AG04450 (cell line): ENCODE measurements at regions of chr14 and their contacts with region 1.

Region 1: DNA sequence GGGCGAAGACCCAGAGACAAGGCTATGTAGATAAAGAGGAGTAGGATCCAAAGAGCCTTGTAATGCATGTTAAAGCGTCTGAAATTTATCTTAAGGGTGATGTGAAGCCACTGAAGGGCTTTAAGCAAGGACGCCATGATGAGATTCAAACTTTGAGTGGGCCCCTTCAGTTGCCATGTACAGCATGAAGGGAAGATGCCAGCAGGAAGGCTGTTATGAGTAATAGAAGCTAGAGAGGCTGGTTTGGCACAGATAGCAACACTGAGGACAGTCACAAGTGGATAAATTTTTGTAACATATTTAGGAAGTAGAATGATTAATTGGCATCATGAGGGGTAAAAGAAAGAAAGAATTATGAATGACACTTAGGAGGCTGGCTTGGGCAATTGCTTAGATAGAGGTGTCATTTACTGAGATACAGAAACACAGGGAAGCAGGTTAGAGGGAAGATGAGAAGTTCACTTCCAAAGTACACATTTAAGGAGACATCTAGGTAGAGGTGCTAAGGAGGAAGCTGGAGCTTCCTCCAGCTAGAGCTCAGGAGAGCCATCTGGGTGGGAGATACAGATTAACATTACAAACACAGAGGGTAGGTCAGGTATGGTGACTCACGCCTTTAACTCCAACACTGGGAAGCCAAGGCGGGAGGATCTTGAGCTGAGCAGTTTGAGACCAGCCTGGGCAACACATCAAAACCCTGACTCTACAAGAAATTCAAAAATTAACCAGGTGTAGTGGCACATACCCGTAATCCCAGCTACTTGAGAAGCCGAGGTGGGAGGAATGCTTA is 13.7 kb downstream of the ATG2B start:
- DNase-seq: no peak
- H3K4me3 ChIP-seq: no peak overlapping the region
- H3K27ac ChIP-seq: no peak overlapping the region
- H3K27me3 ChIP-seq: no peaks in the 10 kb centered on the region
- CTCF ChIP-seq: no peak

Region 2: GRCh38 chr14:96320605-96321004 is 28.9 kb before region 1 on chr14:
- CTCF ChIA-PET with region 1: no interaction called
- POLR2A ChIA-PET with region 1: no interaction called
- DNase-seq: no peak
- H3K4me3 ChIP-seq: no peak overlapping the region
- H3K27ac ChIP-seq: no peak overlapping the region
- H3K27me3 ChIP-seq: no peaks in the 10 kb centered on the region
- CTCF ChIP-seq: no peak

Region 3: GRCh38 chr14:96362965-96363756 is 13.7 kb after region 1 on chr14 and contains the starts of genes ATG2B and GSKIP:
- CTCF ChIA-PET with region 1: no interaction called
- POLR2A ChIA-PET with region 1: interaction called, 10 read pairs
- DNase-seq: peak; percentile 43
- H3K4me3 ChIP-seq: peak within 1 kb of the TSS; percentile 87
- H3K27ac ChIP-seq: peak within 1 kb of the TSS; percentile 70
- H3K27me3 ChIP-seq: no peaks in the 10 kb centered on the region
- CTCF ChIP-seq: no peak
- polyA plus RNA-seq, gene ATG2B: 18.7 and 22.1 TPM in 2 replicates
- polyA plus RNA-seq, gene GSKIP: 28.0 and 37.9 TPM in 2 replicates